ENCODE measurements at regions of chr4 and their contacts with region 1.

Region 1: DNA sequence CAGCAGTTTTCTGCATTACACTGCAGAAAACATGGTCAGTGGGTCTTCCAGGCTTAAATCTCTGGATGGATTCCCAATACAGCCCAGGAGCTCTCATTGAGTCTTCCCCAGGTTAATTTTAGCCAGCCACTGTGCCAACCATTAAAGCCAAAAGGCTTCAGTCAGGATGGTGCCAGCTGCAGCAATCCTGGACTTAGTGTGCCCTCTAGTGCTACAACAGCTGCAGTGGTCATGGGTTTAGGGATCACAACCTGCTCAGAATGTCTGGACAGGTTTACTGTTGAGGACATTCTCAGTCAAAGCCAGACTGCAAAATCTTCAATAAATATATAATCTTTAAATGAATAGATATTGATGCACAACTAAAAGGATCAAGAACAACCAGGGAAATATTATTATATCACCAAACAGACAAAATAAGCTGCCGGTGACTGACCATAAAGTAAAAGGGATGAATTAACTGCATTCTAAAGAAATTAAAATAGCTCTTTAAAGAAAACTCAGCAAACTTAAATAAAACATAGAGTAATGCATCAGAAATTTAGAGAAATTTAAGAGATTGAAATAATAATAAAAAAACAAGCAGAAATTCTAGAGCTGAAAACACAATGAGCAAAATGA is 639.9 kb downstream of the SPOCK3 start:
- DNase-seq: peak; percentile 50
- H3K4me3 ChIP-seq: no peak overlapping the region
- H3K27ac ChIP-seq: no peak overlapping the region
- H3K4me1 ChIP-seq: no peaks in the 10 kb centered on the region
- H3K27me3 ChIP-seq: peaks cover 2% of the 10 kb centered on the region
- CTCF ChIP-seq: peak; percentile 92 to 98

Region 2: GRCh38 chr4:165493359-165493758 is 1101.1 kb before region 1 on chr4:
- CTCF ChIA-PET with region 1: no interaction called
- dilution Hi-C with region 1: no loop called
- in situ Hi-C with region 1: loop called in 1 of 2 experiments (anchors 25 kb)
- intact Hi-C with region 1: loop called (anchors 1 kb)
- DNase-seq: peak; percentile 49
- H3K4me3 ChIP-seq: peak overlapping the region in 1 of 3 experiments; percentile 8
- H3K27ac ChIP-seq: no peak overlapping the region
- H3K4me1 ChIP-seq: no peaks in the 10 kb centered on the region
- H3K27me3 ChIP-seq: no peaks in the 10 kb centered on the region
- CTCF ChIP-seq: peak; percentile 72 to 90

Region 3: DNA sequence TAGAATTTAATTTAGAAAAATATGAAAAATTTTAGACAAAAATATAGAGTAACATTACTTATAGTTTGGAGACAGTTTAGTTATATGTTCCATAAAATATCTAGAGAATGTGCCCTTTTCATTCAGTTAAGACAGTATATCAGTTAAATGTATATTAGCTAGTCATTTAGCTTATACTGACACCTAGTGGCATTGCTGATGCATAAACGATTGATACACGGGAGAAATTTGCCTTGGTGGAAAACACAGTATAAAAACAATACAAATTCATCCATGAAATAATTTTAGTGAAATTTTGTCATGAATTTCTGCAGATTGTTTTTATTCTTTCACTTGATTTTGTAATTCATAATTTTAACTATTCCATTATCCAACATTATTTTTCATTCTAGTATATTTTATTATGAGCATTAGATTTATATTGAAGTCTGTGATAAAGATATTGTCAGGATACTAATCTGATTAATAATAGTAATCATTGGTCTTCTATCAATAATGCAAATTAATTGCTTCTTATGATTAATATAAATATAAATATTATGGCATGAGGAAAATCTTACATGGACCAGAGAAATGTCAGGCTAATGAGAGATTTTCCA is 502.4 kb before region 1 on chr4:
- CTCF ChIA-PET with region 1: no interaction called
- dilution Hi-C with region 1: no loop called
- in situ Hi-C with region 1: no loop called
- intact Hi-C with region 1: loop called (anchors 10 kb)
- DNase-seq: peak; percentile 17
- H3K4me3 ChIP-seq: no peak overlapping the region
- H3K27ac ChIP-seq: no peak overlapping the region
- H3K4me1 ChIP-seq: no peaks in the 10 kb centered on the region
- H3K27me3 ChIP-seq: no peaks in the 10 kb centered on the region
- CTCF ChIP-seq: peak; percentile 73 to 74

Region 4: DNA sequence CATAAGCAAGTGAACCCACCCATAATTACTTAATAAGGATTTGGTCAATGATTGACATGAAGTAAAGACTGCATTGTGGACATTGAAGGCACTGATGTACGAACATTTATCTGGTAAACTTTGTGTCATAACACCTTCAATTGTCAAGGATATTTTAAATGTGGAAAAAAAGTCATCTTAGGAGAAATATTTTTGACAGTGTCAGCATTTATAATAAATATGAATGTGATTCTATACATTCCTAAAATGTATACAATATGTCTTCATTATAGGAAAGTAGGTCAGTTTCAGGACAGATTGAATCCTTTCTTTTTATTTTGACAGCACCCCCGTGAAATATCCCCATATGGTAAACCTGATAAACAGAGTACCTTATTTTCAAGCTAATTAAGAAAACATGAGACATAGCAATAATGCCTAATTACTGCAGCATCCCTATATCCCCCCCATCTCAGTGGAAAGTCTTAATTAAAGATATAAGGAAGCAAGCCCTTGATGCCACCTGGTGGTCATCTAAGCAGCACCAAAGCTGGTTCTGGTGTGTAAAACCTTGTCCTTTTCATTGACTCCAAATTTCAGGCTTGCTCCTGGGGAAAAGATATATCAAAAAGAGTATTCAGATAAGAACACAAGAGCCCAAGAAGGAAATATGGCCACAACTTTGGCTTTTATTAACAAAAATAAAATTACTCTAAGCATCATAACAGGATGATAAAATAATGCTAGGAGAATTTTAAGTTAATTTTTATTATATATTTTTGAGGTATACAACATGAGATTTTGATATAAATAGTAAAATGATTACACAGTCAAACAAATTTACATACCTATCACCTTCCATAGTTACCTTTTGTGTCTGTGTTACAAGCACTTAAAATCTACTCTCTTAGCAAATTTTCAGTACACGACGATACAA is 341.7 kb before region 1 on chr4:
- CTCF ChIA-PET with region 1: no interaction called
- dilution Hi-C with region 1: no loop called
- in situ Hi-C with region 1: no loop called
- intact Hi-C with region 1: loop called (anchors 5 kb)
- DNase-seq: peak; percentile 8
- H3K4me3 ChIP-seq: no peak overlapping the region
- H3K27ac ChIP-seq: no peak overlapping the region
- H3K4me1 ChIP-seq: no peaks in the 10 kb centered on the region
- H3K27me3 ChIP-seq: peaks cover 1% of the 10 kb centered on the region
- CTCF ChIP-seq: peak; percentile 60 to 67

Region 5: GRCh38 chr4:166324321-166324720 is 270.1 kb before region 1 on chr4:
- CTCF ChIA-PET with region 1: interaction called, 3 read pairs
- dilution Hi-C with region 1: no loop called
- in situ Hi-C with region 1: no loop called
- intact Hi-C with region 1: loop called (anchors 1 kb)
- DNase-seq: peak; percentile 30
- H3K4me3 ChIP-seq: no peak overlapping the region
- H3K27ac ChIP-seq: no peak overlapping the region
- H3K4me1 ChIP-seq: peaks cover 8% of the 10 kb centered on the region
- H3K27me3 ChIP-seq: no peaks in the 10 kb centered on the region
- CTCF ChIP-seq: peak; percentile 53 to 60

Measured in mammary epithelial cell (primary cell).